HCT116 (cell line): ENCODE measurements at regions of chr4 and their contacts with region 1.

Region 1: GRCh38 chr4:112031712-112032328 is 113.4 kb upstream of the FAM241A start:
- DNase-seq: peak; percentile 48
- ATAC-seq: peak; percentile 78; the same call in 1 of the 2 replicates
- H3K4me3 ChIP-seq: no peak overlapping the region
- H3K27ac ChIP-seq: no peak overlapping the region
- H3K4me1 ChIP-seq: no peaks in the 10 kb centered on the region
- H3K27me3 ChIP-seq: no peaks in the 10 kb centered on the region
- CTCF ChIP-seq: peak; percentile 59 to 90 (median 83); a peak in 5 of 6 replicates
- POLR2A ChIP-seq: no peak
- RAD21 ChIP-seq: peak; percentile 93

Region 2: DNA sequence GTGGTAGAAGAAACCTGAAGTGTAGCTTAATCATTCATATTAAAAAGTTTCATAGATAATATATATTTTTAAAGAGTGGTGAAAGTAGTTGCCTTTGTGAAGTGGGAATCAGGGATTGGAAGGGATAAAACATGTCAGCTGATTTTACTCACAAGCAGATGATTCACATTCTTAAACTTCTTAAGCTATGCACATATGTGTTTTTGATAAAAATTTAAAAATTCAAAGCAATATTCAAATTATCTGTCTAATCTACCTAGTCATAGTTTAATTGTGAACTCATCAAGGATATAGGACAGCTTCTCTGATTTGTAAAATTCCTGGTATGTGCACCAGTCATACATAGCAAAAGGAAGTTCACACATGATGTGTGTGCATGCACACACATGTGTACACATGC is 888.3 kb before region 1 on chr4:
- CTCF ChIA-PET with region 1: no interaction called
- POLR2A ChIA-PET with region 1: no interaction called
- RAD21 ChIA-PET with region 1: no interaction called
- intact Hi-C with region 1: loop called (anchors 10 kb)
- DNase-seq: no peak
- ATAC-seq: no peak
- H3K4me3 ChIP-seq: no peak overlapping the region
- H3K27ac ChIP-seq: no peak overlapping the region
- H3K4me1 ChIP-seq: no peaks in the 10 kb centered on the region
- H3K27me3 ChIP-seq: no peaks in the 10 kb centered on the region
- CTCF ChIP-seq: no peak
- POLR2A ChIP-seq: no peak
- RAD21 ChIP-seq: no peak

Region 3: GRCh38 chr4:111854494-111855087 is 177.2 kb before region 1 on chr4:
- CTCF ChIA-PET with region 1: interaction called, 31 read pairs
- POLR2A ChIA-PET with region 1: no interaction called
- RAD21 ChIA-PET with region 1: interaction called, 3 to 4 read pairs
- intact Hi-C with region 1: loop called (anchors 1 kb)
- DNase-seq: peak; percentile 39
- ATAC-seq: peak; percentile 82
- H3K4me3 ChIP-seq: no peak overlapping the region
- H3K27ac ChIP-seq: no peak overlapping the region
- H3K4me1 ChIP-seq: no peaks in the 10 kb centered on the region
- H3K27me3 ChIP-seq: no peaks in the 10 kb centered on the region
- CTCF ChIP-seq: peak; percentile 55 to 89 (median 78)
- POLR2A ChIP-seq: no peak
- RAD21 ChIP-seq: peak; percentile 84

Region 4: GRCh38 chr4:111937368-111937767 is 94.5 kb before region 1 on chr4:
- CTCF ChIA-PET with region 1: interaction called, 47 read pairs
- POLR2A ChIA-PET with region 1: no interaction called
- RAD21 ChIA-PET with region 1: interaction called, 3 to 4 read pairs
- intact Hi-C with region 1: no loop called
- DNase-seq: peak; percentile 48
- ATAC-seq: peak; percentile 88
- H3K4me3 ChIP-seq: no peak overlapping the region
- H3K27ac ChIP-seq: no peak overlapping the region
- H3K4me1 ChIP-seq: 0 out of 4 replicates have a peak, but pooled peaks cover 0 to 3% of the 10 kb centered on the region in 2 experiments
- H3K27me3 ChIP-seq: no peaks in the 10 kb centered on the region
- CTCF ChIP-seq: peak; percentile 31 to 72 (median 68); a peak in 5 of 6 replicates
- POLR2A ChIP-seq: no peak
- RAD21 ChIP-seq: peak; percentile 79

Region 5: GRCh38 chr4:111943795-111944203 is 88.0 kb before region 1 on chr4:
- CTCF ChIA-PET with region 1: interaction called, 47 read pairs
- POLR2A ChIA-PET with region 1: no interaction called
- RAD21 ChIA-PET with region 1: interaction called, 4 read pairs
- intact Hi-C with region 1: loop called (anchors 1 kb)
- DNase-seq: peak; percentile 66
- ATAC-seq: peak; percentile 99
- H3K4me3 ChIP-seq: no peak overlapping the region
- H3K27ac ChIP-seq: no peak overlapping the region
- H3K4me1 ChIP-seq: 0 out of 4 replicates have a peak, but pooled peaks cover 0 to 2% of the 10 kb centered on the region in 2 experiments
- H3K27me3 ChIP-seq: no peaks in the 10 kb centered on the region
- CTCF ChIP-seq: peak; percentile 73 to 79 (median 74)
- POLR2A ChIP-seq: no peak
- RAD21 ChIP-seq: peak; percentile 92